ENCODE measurements at regions of chr6 and their contacts with region 1.

Region 1: DNA sequence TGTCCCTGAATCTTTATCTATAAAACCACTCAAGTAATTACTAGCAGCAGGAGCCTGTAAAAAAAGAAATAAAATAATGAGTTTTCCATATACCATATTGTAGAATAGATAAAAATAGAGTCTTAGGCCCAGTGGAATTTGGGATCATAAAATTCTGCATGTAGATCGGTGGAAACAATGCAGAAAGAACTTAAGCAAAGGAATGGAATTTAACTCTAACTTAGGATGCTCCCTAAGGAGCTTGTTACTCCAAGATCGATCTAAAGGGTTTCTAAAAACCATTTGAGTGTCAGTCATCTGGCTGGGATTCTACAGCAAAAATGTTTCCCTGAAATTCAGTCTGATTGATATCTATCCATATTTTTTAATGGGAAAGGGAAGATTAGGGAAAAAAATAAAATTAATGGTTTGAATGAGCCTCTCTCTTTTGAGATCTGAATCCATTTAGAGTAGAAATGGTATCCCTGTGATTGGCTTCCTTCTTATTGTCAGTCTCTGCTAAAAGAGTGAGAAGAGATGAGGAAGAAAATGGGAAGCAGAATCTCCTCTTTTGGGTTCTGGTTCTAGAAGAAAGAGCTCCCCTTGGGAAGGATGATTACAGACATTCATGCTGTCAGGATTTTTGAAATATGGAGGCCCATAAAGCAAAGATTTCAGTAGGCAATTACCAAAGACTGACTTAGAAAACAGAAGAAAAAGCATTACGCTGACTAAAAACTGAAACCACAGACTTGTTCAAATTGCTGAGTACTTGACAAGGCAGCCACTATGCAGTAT is 564.3 kb upstream of the MARCKS start:
- DNase-seq: no peak
- H3K4me3 ChIP-seq: no peak overlapping the region
- H3K27ac ChIP-seq: no peak overlapping the region
- H3K4me1 ChIP-seq: no peaks in the 10 kb centered on the region
- H3K27me3 ChIP-seq: no peaks in the 10 kb centered on the region
- CTCF ChIP-seq: no peak
- POLR2A ChIP-seq: no peak

Region 2: GRCh38 chr6:113326781-113327180 is 33.9 kb after region 1 on chr6:
- CTCF ChIA-PET with region 1: no interaction called
- POLR2A ChIA-PET with region 1: no interaction called
- dilution Hi-C with region 1: no loop called
- intact Hi-C with region 1: loop called (anchors 1 kb)
- DNase-seq: no peak
- H3K4me3 ChIP-seq: no peak overlapping the region
- H3K27ac ChIP-seq: no peak overlapping the region
- H3K4me1 ChIP-seq: no peaks in the 10 kb centered on the region
- H3K27me3 ChIP-seq: no peaks in the 10 kb centered on the region
- CTCF ChIP-seq: no peak
- POLR2A ChIP-seq: no peak

Measured in endothelial cell of umbilical vein (primary cell).